ENCODE measurements at regions of chr9 and their contacts with region 1.

Region 1: DNA sequence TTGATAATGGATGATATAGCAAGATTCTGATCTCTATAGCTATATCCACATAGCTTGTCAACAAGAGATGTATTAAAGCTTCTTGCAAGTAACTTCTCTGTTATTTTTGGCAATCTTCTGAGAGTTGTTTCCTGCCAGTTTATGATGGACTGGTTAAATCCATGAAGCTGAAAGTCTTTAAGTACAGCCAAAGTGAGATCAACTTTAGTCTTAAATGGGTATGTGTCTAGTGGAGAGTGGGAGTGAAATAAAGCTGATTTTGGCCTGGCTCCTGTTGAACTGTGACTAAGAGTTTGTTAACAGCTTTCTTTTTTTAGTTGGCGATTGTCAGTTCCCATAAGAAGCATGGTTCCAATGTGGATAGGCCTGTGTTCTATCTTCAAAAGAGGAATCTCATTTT is 350.9 kb upstream of the PCSK5 start:
- DNase-seq: no peak
- ATAC-seq: peak; percentile 78
- H3K4me3 ChIP-seq: no peak overlapping the region
- H3K27ac ChIP-seq: no peak overlapping the region
- H3K4me1 ChIP-seq: no peaks in the 10 kb centered on the region
- H3K27me3 ChIP-seq: no peaks in the 10 kb centered on the region

Region 2: DNA sequence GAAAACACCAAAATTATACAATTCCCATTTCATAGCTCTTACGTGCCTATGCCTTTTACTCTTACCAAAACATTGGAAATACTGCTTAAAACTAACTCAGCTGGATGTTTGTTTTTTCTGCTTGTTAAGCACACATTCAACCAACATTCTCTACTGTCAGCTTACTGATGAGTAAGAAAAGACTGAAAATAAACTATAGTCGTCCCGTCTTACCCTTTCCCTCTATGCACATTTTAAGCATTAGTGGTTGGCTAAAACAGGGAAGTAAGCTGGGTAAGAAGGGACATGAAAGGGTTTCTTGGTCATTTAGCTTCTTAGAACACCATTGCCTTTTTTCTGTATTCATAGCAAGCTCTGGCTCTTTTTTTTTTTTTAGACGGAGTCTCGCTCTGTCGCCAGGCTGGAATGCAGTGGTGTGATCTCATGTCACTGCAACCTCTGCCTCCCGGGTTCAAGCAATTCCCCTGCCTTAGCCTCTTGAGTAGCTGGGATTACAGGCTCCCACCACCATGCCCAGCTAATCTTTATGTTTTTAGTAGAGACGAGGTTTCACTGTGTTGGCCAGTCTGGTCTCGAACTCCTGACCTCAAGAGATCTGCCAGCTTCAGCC is 118.9 kb after region 1 on chr9:
- intact Hi-C with region 1: loop called in 1 of 2 experiments (anchors 10 kb)
- DNase-seq: no peak
- ATAC-seq: peak; percentile 30
- H3K4me3 ChIP-seq: no peak overlapping the region
- H3K27ac ChIP-seq: peak overlapping the region; percentile 45 to 57
- H3K4me1 ChIP-seq: peaks cover 0 to 4% of the 10 kb centered on the region in 2 donors
- H3K27me3 ChIP-seq: no peaks in the 10 kb centered on the region

Region 3: GRCh38 chr9:75712700-75713099 is 173.2 kb after region 1 on chr9:
- intact Hi-C with region 1: loop called in 1 of 2 experiments (anchors 10 kb)
- DNase-seq: no peak
- ATAC-seq: no peak
- H3K4me3 ChIP-seq: no peak overlapping the region
- H3K27ac ChIP-seq: no peak overlapping the region
- H3K4me1 ChIP-seq: peaks cover 0 to 2% of the 10 kb centered on the region in 2 donors
- H3K27me3 ChIP-seq: no peaks in the 10 kb centered on the region

Measured in aorta (tissue), 5 donors.